Dorsolateral prefrontal cortex (tissue), 120 donors: ENCODE measurements at regions of chr20 and their contacts with region 1.

Region 1: GRCh38 chr20:48791015-48791514 is 36.7 kb downstream of the PREX1 start:
- DNase-seq: peak in 1 of 10 donors; percentile 52
- H3K4me3 ChIP-seq: peak overlapping the region in 8 of 59 donors; percentile 0 to 26 (median 18)
- H3K27ac ChIP-seq: peak overlapping the region in 55 of 59 donors; percentile 1 to 85 (median 70)
- H3K27me3 ChIP-seq: no peaks in the 10 kb centered on the region
- CTCF ChIP-seq: no peak

Region 2: DNA sequence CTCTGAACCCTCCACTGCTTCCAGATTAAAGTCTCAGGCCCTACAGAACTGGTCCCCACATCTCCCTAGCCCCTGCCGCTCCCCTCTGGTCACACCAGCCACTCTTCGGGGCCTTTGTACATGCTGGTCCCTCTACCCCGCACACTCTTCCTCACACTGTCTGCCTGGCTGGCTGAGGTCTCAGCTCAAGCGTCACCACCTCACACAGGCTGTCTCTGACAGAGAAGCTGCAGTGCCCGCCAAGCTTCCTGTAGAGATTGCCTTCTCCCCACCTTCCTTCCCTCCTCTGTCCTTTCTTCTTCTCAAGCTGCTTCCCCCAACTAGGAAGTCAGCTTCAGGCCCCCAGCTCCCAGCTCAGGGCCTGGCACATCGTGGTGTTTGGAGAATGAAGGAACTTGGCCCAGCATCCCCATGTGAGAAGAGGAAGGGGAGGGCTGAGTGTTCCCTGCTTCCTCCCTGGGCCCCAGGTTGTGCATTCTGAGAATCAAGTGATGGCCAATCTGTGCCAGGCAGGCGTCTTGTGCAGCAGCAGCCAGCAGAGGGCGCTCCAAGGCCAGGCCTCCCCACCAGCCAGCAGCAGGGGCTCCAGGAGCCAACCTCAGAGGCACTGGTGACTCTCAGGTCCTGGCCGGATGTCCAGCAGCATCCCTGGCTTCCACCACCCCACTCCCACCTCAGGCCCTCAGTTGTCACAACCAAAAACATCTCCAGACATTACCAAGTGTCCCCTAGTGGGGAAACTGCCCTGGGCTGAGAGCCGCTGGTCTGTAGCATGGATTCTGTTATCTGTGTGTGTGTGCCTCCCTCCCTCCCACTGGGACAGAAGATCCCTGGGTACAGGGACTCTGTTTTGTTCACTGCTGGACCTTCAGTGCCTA is 155.4 kb before region 1 on chr20:
- intact Hi-C with region 1: no loop called
- DNase-seq: peak; percentile 32 to 88 (median 76)
- H3K4me3 ChIP-seq: no peak overlapping the region
- H3K27ac ChIP-seq: peak overlapping the region in 58 of 59 donors; percentile 33 to 95 (median 81)
- H3K27me3 ChIP-seq: no peaks in the 10 kb centered on the region
- CTCF ChIP-seq: peak; percentile 65 to 96 (median 86)

Region 3: DNA sequence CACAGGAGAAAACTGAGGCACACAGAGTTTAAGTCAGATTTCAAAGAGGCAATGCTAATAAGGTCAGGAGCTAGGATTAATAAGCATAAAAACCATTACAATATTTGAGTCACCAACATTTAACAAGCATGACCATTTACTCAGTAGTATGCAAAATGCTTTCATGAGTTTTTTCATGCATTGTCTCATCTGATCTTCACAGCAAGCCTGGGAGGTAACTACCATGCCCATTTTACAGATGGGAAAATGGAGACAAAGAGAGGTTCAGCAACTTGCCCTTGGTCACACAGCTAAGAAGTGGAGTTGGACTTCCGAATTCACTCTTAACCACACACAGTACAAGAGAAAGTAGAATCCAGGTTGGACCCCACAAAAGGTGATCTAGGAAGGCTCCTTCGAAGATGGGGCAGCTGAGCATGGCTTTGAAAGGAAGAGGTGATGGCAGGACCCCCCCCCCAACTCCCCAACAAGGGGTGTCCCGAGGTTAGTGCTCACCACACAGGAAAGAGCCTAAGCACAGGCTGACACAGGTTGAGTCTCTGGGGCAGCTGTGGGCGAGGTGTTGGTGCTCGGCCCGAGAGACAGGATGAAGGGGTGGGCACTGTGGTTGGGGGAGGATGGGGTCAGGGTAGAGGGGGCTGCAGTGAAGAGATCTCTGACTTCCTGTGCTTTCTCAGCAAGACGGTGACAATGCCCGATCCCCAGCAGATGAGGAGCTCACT is 72.0 kb before region 1 on chr20:
- intact Hi-C with region 1: no loop called
- DNase-seq: peak in 1 of 10 donors; percentile 15
- H3K4me3 ChIP-seq: no peak overlapping the region
- H3K27ac ChIP-seq: peak overlapping the region in 55 of 59 donors; percentile 2 to 100 (median 98)
- H3K27me3 ChIP-seq: no peaks in the 10 kb centered on the region
- CTCF ChIP-seq: no peak

Region 4: DNA sequence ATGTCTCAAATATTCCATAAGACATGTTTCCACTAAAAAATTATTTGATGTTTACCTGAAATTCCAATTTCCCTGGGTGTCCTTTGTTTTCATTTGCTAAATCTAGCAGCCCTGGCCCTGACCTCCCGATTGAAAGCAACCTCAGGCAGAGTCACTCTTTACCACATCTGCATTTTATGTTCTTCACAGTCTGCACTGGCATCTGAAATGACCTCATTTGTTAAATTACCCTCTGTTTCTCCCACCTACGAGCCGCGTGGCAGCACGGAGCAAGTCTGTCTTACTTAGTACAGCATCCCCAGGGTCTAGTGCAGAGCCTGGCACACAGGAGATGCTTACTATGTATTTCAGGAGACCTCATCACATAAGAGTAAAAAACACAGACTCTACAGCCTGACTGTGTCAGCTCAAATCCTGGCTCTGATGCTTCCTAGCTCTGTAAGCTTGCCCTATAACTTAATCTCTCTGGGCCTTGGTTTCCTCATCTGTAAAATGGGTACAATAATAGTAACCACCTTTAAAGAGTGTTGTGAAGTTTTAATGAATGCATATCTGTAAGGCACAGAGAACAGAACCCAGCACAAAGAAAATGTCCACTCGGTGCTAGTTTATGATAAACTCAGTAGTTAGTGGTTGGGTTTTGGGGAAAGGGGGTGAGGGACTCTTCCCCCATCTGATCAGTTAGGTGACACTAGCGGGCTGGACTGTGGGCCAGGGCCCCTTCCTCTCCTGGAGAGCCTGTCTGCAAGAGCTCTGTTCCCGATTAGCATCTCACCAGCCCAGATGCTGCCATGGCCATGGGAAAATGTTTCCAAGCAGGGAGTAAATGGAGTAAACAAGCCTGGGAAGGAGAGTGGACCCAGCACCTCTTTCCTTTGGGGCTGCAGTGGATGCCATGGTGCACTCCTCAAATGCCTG is 51.4 kb before region 1 on chr20:
- intact Hi-C with region 1: loop called in 1 of 2 experiments (anchors 10 kb)
- DNase-seq: no peak
- H3K4me3 ChIP-seq: no peak overlapping the region
- H3K27ac ChIP-seq: peak overlapping the region in 57 of 59 donors; percentile 42 to 100 (median 88)
- H3K27me3 ChIP-seq: no peaks in the 10 kb centered on the region
- CTCF ChIP-seq: no peak